Endothelial cell of umbilical vein (primary cell): ENCODE measurements at regions of chr2 and their contacts with region 1.

Region 1: DNA sequence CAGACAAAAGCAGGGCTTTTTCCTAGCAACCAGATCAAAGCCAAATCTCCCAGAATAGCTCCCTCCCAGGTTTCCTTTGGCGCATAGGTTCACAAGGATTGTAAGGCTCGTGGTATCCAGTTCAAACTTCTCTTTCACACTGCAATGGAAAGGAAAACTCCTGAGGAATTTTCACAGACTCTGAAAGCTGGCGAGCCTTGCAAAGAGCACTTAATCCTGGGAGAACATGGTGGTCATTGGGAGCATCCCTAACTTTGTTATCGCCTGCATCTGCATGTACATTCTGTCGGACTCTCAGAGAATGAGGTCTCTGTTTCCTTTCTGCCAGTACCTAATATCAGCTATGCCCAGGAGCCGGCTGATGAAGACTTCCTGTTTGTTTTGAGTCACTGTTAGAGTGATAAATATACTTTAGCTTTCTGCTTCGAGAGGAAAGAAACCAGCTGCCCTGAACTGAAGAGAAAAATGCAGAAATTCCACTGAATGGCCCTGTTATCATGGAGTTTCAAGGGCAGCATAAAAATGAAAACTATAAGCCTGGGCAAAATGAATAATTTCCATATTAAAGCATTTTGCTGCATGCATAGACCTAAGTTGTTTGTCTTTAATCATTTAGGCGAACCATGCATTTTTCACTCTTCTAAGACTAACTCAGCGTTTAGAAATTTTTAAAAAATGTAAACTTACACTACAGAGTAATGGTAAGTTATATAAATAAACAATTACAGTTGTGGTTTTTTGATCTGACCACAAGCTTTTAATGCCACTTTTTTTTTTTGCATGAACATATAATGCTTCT is 76.4 kb upstream of the ZEB2 start:
- DNase-seq: peak; percentile 89
- H3K4me3 ChIP-seq: no peak overlapping the region
- H3K27ac ChIP-seq: peak overlapping the region; percentile 71
- H3K4me1 ChIP-seq: peaks cover 38% of the 10 kb centered on the region
- H3K27me3 ChIP-seq: no peaks in the 10 kb centered on the region
- CTCF ChIP-seq: no peak
- POLR2A ChIP-seq: no peak

Region 2: DNA sequence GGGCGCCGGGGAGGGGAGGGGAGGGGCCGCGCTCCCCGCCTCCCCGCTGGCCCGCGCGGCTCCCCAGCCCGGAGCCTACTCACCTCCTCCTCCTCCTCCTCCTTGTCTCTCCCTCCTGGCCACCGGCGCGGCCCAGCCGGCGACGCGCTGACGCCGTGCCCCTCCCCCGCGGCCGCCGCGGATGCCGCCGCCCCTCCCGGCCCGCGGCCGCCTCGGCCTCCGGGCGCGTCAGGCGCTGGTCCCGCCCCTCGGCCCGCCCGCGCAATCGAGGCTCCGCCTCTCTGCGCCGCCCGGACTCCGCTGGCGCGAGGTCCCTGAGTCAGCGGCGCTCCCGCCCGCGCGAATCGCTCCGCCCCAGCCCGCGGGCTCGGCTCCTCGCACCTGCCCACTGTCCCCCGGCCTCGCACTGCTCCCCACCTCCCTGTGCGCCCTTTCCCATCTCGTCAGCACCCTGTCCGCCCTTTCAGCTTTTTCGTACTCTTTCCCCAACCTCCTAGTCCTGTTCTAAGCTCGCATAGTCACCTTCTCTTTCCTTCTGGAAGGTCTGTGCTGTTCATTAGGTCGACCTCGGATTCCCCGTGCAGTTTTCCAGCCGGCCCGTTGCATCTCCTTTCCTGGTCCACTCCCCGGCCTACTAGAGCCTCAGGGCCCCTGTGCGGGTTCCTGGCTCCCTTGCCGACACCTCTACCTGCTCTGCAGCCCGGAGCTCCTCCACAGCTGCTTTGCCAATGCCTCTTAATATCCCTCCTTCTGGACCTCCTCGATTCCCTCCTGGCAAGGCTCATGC is 263.7 kb before region 1 on chr2:
- CTCF ChIA-PET with region 1: no interaction called
- POLR2A ChIA-PET with region 1: no interaction called
- dilution Hi-C with region 1: no loop called
- intact Hi-C with region 1: loop called (anchors 5 kb)
- DNase-seq: peak; percentile 88
- H3K4me3 ChIP-seq: peak overlapping the region; percentile 49 to 71 (median 60)
- H3K27ac ChIP-seq: peak overlapping the region; percentile 85
- H3K4me1 ChIP-seq: peaks cover 15% of the 10 kb centered on the region
- H3K27me3 ChIP-seq: no peaks in the 10 kb centered on the region
- CTCF ChIP-seq: no peak
- POLR2A ChIP-seq: peak; percentile 79

Region 3: GRCh38 chr2:144524118-144524957 is 71.9 kb before region 1 on chr2:
- CTCF ChIA-PET with region 1: interaction called, 4 read pairs
- POLR2A ChIA-PET with region 1: no interaction called
- dilution Hi-C with region 1: no loop called
- intact Hi-C with region 1: loop called (anchors 1 kb)
- DNase-seq: no peak
- H3K4me3 ChIP-seq: peak overlapping the region; percentile 45 to 91 (median 89)
- H3K27ac ChIP-seq: peak overlapping the region; percentile 53
- H3K4me1 ChIP-seq: peaks cover 30% of the 10 kb centered on the region
- H3K27me3 ChIP-seq: no peaks in the 10 kb centered on the region
- CTCF ChIP-seq: no peak
- POLR2A ChIP-seq: no peak

Region 4: GRCh38 chr2:144607891-144608521 is 11.7 kb after region 1 on chr2:
- CTCF ChIA-PET with region 1: interaction called, 10 read pairs
- POLR2A ChIA-PET with region 1: no interaction called
- dilution Hi-C with region 1: no loop called
- intact Hi-C with region 1: no loop called
- DNase-seq: no peak
- H3K4me3 ChIP-seq: no peak overlapping the region
- H3K27ac ChIP-seq: no peak overlapping the region
- H3K4me1 ChIP-seq: no peaks in the 10 kb centered on the region
- H3K27me3 ChIP-seq: no peaks in the 10 kb centered on the region
- CTCF ChIP-seq: no peak
- POLR2A ChIP-seq: no peak

Region 5: DNA sequence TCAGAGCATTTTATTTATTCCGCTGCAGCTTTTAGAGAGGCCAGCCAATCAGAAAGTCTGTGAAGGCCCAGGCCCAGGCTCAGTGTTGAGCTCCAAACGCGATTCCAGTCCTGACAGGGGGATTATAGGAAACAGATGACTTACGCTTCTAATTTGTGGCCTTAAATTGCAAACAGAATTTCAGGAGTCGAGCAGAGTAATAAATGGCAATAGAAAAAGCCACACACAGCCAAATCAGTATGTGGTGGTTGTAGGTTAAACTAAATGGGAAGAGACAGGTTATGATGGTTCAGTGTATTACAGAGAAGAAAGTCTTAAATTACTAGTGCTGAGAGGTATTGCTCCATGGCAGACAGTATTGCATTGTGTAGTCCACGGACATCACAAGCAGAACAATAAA is 54.6 kb after region 1 on chr2:
- CTCF ChIA-PET with region 1: no interaction called
- POLR2A ChIA-PET with region 1: no interaction called
- dilution Hi-C with region 1: no loop called
- intact Hi-C with region 1: no loop called
- DNase-seq: no peak
- H3K4me3 ChIP-seq: no peak overlapping the region
- H3K27ac ChIP-seq: no peak overlapping the region
- H3K4me1 ChIP-seq: no peaks in the 10 kb centered on the region
- H3K27me3 ChIP-seq: no peaks in the 10 kb centered on the region
- CTCF ChIP-seq: no peak
- POLR2A ChIP-seq: no peak

Region 6: GRCh38 chr2:145007093-145007959 is 411.1 kb after region 1 on chr2:
- CTCF ChIA-PET with region 1: interaction called, 3 read pairs
- POLR2A ChIA-PET with region 1: no interaction called
- dilution Hi-C with region 1: no loop called
- intact Hi-C with region 1: loop called (anchors 5 kb)
- DNase-seq: peak; percentile 91
- H3K4me3 ChIP-seq: peak overlapping the region in 1 of 3 experiments; percentile 3
- H3K27ac ChIP-seq: peak overlapping the region; percentile 80
- H3K4me1 ChIP-seq: peaks cover 38% of the 10 kb centered on the region
- H3K27me3 ChIP-seq: no peaks in the 10 kb centered on the region
- CTCF ChIP-seq: no peak
- POLR2A ChIP-seq: no peak

Region 7: GRCh38 chr2:145199827-145200706 is 603.8 kb after region 1 on chr2:
- CTCF ChIA-PET with region 1: no interaction called
- POLR2A ChIA-PET with region 1: no interaction called
- dilution Hi-C with region 1: no loop called
- intact Hi-C with region 1: no loop called
- DNase-seq: no peak
- H3K4me3 ChIP-seq: no peak overlapping the region
- H3K27ac ChIP-seq: no peak overlapping the region
- H3K4me1 ChIP-seq: no peaks in the 10 kb centered on the region
- H3K27me3 ChIP-seq: no peaks in the 10 kb centered on the region
- CTCF ChIP-seq: no peak
- POLR2A ChIP-seq: no peak